IMR-90 (cell line): ENCODE measurements at regions of chr11 and their contacts with region 1.

Region 1: DNA sequence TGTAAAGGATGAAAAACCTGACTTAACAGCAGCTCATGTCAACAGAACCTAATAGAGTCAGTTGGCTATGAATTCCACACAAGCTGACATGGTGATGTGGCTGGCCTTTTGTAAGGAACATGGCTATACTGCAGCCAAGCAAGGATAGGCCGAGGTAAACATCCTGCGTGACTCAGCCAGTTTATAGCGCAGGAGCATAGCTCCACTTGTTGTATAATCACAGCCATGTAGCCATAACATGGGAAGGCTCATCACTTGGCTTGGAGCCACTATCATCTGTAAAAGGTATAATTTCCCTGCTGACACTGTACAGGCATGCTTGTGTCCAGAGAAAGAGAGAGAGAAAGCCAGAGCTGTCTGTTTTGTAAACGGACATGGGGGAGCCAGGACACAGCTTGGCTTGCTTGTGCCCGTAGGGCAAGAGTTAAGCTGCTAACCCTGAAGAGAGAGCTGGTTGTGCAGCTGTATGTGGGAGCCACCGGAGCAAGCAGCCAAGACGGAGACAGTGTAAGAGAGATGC is 104.4 kb upstream of the PLET1 start:
- DNase-seq: peak; percentile 99
- ATAC-seq: peak; percentile 89
- H3K4me3 ChIP-seq: no peak overlapping the region
- H3K27ac ChIP-seq: peak overlapping the region; percentile 98
- H3K4me1 ChIP-seq: peaks cover 31% of the 10 kb centered on the region
- H3K27me3 ChIP-seq: no peaks in the 10 kb centered on the region
- CTCF ChIP-seq: no peak
- POLR2A ChIP-seq: 0 out of 2 replicates have a peak, but pooled peaks have one; percentile 26
- RAD21 ChIP-seq: no peak

Region 2: GRCh38 chr11:111982019-111982464 is 383.0 kb before region 1 on chr11:
- CTCF ChIA-PET with region 1: no interaction called
- POLR2A ChIA-PET with region 1: no interaction called
- dilution Hi-C with region 1: no loop called
- in situ Hi-C with region 1: no loop called
- intact Hi-C with region 1: no loop called
- DNase-seq: peak; percentile 43
- ATAC-seq: no peak
- H3K4me3 ChIP-seq: no peak overlapping the region
- H3K27ac ChIP-seq: no peak overlapping the region
- H3K4me1 ChIP-seq: peaks cover 11% of the 10 kb centered on the region
- H3K27me3 ChIP-seq: no peaks in the 10 kb centered on the region
- CTCF ChIP-seq: peak; percentile 52
- POLR2A ChIP-seq: no peak
- RAD21 ChIP-seq: peak; percentile 64

Region 3: GRCh38 chr11:112321521-112322172 is 43.4 kb before region 1 on chr11:
- CTCF ChIA-PET with region 1: no interaction called
- POLR2A ChIA-PET with region 1: no interaction called
- dilution Hi-C with region 1: no loop called
- in situ Hi-C with region 1: loop called (anchors 5 kb)
- intact Hi-C with region 1: loop called (anchors 2 kb)
- DNase-seq: peak; percentile 89
- ATAC-seq: peak; percentile 16; the same call in 1 of the 2 replicates
- H3K4me3 ChIP-seq: no peak overlapping the region
- H3K27ac ChIP-seq: no peak overlapping the region
- H3K4me1 ChIP-seq: peaks cover 20% of the 10 kb centered on the region
- H3K27me3 ChIP-seq: no peaks in the 10 kb centered on the region
- CTCF ChIP-seq: no peak
- POLR2A ChIP-seq: no peak
- RAD21 ChIP-seq: no peak

Region 4: GRCh38 chr11:112440518-112440917 is 75.5 kb after region 1 on chr11:
- CTCF ChIA-PET with region 1: no interaction called
- POLR2A ChIA-PET with region 1: no interaction called
- dilution Hi-C with region 1: no loop called
- in situ Hi-C with region 1: no loop called
- intact Hi-C with region 1: no loop called
- DNase-seq: no peak
- ATAC-seq: no peak
- H3K4me3 ChIP-seq: no peak overlapping the region
- H3K27ac ChIP-seq: no peak overlapping the region
- H3K4me1 ChIP-seq: no peaks in the 10 kb centered on the region
- H3K27me3 ChIP-seq: peaks cover 2% of the 10 kb centered on the region; the same call in 1 of the 2 replicates
- CTCF ChIP-seq: no peak
- POLR2A ChIP-seq: no peak
- RAD21 ChIP-seq: no peak